Dorsolateral prefrontal cortex (tissue), 120 donors: ENCODE measurements at regions of chr19 and their contacts with region 1.

Region 1: GRCh38 chr19:34712395-34713261 is 21.4 kb upstream of the ZNF181 start:
- DNase-seq: peak in 4 of 10 donors; percentile 11 to 56 (median 46)
- H3K4me3 ChIP-seq: peak overlapping the region in 1 of 59 donors; percentile 4
- H3K27ac ChIP-seq: no peak overlapping the region
- H3K27me3 ChIP-seq: no peaks in the 10 kb centered on the region
- CTCF ChIP-seq: peak; percentile 72 to 94 (median 86)

Region 2: GRCh38 chr19:34501339-34502320 is 211.0 kb before region 1 on chr19:
- intact Hi-C with region 1: loop called in 1 of 2 experiments (anchors 5 kb)
- DNase-seq: peak; percentile 86 to 94 (median 90)
- H3K4me3 ChIP-seq: peak overlapping the region in 20 of 59 donors; percentile 0 to 36 (median 16)
- H3K27ac ChIP-seq: peak overlapping the region in 12 of 59 donors; percentile 3 to 53 (median 34)
- H3K27me3 ChIP-seq: no peaks in the 10 kb centered on the region
- CTCF ChIP-seq: peak; percentile 74 to 100 (median 98)

Region 3: DNA sequence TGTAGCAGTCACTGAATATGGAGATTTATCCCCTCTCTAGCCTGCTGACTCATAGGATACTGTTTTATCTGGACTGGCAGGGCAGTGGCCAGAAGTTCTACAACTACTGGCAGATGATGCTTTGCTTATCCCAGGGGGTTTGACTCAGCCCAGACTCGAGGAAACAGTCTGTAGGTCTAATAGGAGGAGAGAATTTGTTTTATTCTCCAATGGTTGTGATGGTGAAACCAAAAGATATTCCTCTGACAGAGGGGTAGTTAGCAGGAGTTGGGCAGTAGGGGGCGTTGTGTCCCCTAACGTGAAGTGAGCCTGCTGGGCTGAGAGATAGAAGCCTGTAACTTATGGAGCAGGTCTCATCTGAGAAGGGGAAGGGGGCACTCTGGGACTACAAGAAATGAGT is 156.1 kb before region 1 on chr19:
- intact Hi-C with region 1: loop called in 1 of 2 experiments (anchors 10 kb)
- DNase-seq: peak in 1 of 10 donors; percentile 43
- H3K4me3 ChIP-seq: no peak overlapping the region
- H3K27ac ChIP-seq: no peak overlapping the region
- H3K27me3 ChIP-seq: peaks cover 0 to 9% (median 0%) of the 10 kb centered on the region in 45 donors
- CTCF ChIP-seq: peak in 45 of 56 donors; percentile 17 to 67 (median 42)

Region 4: DNA sequence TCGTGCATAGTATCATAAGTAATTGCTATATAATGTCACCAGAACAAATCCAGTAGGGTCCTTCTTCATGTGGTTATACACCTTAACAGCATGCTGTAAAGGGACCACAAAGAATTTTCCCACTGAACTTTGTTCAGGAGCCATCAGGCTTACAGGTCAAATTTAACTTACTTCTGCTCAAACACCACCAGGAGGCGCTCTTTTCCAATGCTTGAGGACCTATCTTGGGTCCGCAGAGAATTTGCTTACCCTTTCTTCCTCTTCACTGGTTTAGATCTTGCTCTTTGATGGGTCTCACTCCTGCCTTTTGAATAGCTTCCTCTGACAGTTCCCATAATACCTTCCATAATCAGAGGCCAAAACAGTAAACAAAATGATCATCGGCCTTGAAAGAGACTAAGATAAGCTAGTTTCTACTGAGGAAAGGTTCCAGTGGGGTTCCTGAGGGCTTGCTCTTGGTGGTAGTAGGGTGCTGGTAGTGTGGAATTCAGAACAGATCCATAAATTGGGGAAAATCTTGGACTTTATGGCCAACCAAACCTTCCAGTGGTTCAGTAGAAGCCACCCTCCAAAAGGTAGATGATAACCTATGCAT is 73.0 kb before region 1 on chr19:
- intact Hi-C with region 1: loop called (anchors 1 to 10 kb)
- DNase-seq: peak in 4 of 10 donors; percentile 38 to 66 (median 46)
- H3K4me3 ChIP-seq: no peak overlapping the region
- H3K27ac ChIP-seq: no peak overlapping the region
- H3K27me3 ChIP-seq: no peaks in the 10 kb centered on the region
- CTCF ChIP-seq: peak; percentile 64 to 95 (median 79)

Region 5: GRCh38 chr19:34677386-34678084 is 35.1 kb before region 1 on chr19 and contains the start of gene ZNF302:
- intact Hi-C with region 1: loop called in 1 of 2 experiments (anchors 5 kb)
- DNase-seq: peak; percentile 94 to 97 (median 96)
- H3K4me3 ChIP-seq: peak within 1 kb of the TSS; percentile 74 to 99 (median 92)
- H3K27ac ChIP-seq: peak within 1 kb of the TSS; percentile 35 to 100 (median 97)
- H3K27me3 ChIP-seq: no peaks in the 10 kb centered on the region
- CTCF ChIP-seq: peak in 19 of 56 donors; percentile 2 to 57 (median 29)
- total RNA-seq, gene ZNF302: 42.2 to 67.0 (median 53.7) TPM